Posterior vena cava (tissue), 2 donors: ENCODE measurements at regions of chr15 and their contacts with region 1.

Region 1: GRCh38 chr15:66946578-66947164 is 118.7 kb upstream of the SMAD3 start:
- DNase-seq: peak; percentile 90

Region 2: DNA sequence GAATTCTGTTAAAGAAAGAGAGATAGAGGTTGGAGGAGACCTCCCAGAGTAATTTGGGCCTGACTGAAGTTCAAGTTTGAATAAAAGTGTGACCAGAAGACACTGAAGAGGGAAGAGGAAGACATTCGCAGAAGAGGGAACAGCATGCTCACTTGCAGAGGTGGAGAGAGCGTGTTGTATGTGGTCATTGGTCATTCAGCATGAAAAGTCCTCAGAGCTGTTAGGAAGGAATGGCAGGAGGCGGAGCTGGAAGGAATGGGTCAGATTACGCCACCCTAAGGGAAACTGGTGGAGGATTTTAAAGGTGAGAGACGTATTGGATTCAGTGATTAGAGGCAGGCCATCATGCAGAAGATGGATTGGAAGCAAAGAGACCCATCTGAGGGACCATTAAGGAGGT is 349.5 kb after region 1 on chr15:
- intact Hi-C with region 1: loop called in 1 of 2 experiments (anchors 5 kb)
- DNase-seq: no peak

Region 3: GRCh38 chr15:67307156-67307555 is 360.5 kb after region 1 on chr15:
- intact Hi-C with region 1: loop called in 1 of 2 experiments (anchors 5 kb)
- DNase-seq: no peak

Region 4: GRCh38 chr15:67433495-67434099 is 486.9 kb after region 1 on chr15:
- intact Hi-C with region 1: loop called in 1 of 2 experiments (anchors 5 kb)
- DNase-seq: peak; percentile 78